ENCODE measurements at regions of chr2 and their contacts with region 1.

Region 1: GRCh38 chr2:9630749-9631483 is at the start of gene YWHAQ:
- DNase-seq: peak; percentile 99
- ATAC-seq: peak; percentile 88
- H3K4me3 Mint-ChIP-seq: peak within 1 kb of the TSS; percentile 96
- H3K27ac Mint-ChIP-seq: peak within 1 kb of the TSS; percentile 95
- H3K4me1 Mint-ChIP-seq: peaks cover 39% of the 10 kb centered on the region
- H3K27me3 Mint-ChIP-seq: peaks cover 20% of the 10 kb centered on the region
- total RNA-seq, gene YWHAQ: 191 to 216 TPM

Region 2: GRCh38 chr2:9474361-9474967 is 156.5 kb before region 1 on chr2 and contains the start of gene IAH1:
- POLR2A ChIA-PET with region 1: interaction called, 17 read pairs
- DNase-seq: peak; percentile 84
- ATAC-seq: peak; percentile 85
- H3K4me3 Mint-ChIP-seq: peak within 1 kb of the TSS; percentile 80
- H3K27ac Mint-ChIP-seq: peak within 1 kb of the TSS; percentile 86
- H3K4me1 Mint-ChIP-seq: peaks cover 28% of the 10 kb centered on the region
- H3K27me3 Mint-ChIP-seq: no peaks in the 10 kb centered on the region
- total RNA-seq, gene IAH1: 73.6 to 73.9 TPM

Region 3: DNA sequence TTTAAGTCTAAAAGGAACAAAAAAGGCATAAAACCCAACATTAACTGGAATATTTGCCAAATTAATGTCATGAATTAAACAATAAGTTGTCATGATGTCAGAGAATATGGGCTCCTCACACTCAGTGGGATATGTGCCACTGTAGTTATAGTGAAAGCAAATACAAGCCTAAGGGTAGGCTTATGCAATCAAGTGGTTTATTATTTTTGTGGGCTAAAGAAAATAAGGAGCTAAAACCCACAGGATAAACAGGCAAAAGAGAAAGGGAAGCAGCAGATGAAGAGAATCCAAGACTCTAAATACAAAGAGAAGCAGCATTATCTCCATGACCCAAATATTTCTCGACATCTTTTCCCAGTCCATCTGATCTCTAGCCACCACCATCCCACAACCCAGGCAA is 17.6 kb before region 1 on chr2:
- POLR2A ChIA-PET with region 1: interaction called, 20 read pairs
- DNase-seq: no peak
- ATAC-seq: no peak
- H3K4me3 Mint-ChIP-seq: no peak overlapping the region
- H3K27ac Mint-ChIP-seq: no peak overlapping the region
- H3K4me1 Mint-ChIP-seq: peaks cover 53% of the 10 kb centered on the region
- H3K27me3 Mint-ChIP-seq: no peaks in the 10 kb centered on the region

Region 4: DNA sequence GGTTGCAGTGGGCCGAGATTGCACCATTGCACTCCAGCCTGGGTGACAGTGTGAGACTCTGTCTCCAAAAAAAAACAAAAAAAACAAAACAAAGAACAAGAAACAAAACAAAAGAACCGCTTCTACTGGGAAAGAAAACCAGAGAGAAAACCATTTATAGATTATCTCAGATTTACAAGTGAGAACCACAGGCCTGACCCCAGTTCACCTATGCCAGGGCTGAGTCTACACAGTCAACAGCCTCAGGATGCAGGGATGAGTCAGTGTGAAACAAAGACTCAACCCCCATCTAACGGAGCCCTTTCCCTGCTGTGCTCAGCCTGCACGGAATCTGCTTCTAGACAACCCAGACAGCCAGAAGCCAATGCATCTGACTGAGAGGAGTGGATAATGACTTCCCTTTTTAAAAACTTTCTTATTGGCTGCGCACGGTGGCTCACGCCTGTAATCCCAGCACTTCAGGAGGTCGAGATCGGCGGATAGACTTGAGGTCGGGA is 25.4 kb after region 1 on chr2:
- POLR2A ChIA-PET with region 1: no interaction called
- DNase-seq: no peak
- ATAC-seq: peak; percentile 81
- H3K4me3 Mint-ChIP-seq: no peak overlapping the region
- H3K27ac Mint-ChIP-seq: no peak overlapping the region
- H3K4me1 Mint-ChIP-seq: peaks cover 9% of the 10 kb centered on the region
- H3K27me3 Mint-ChIP-seq: peaks cover 20% of the 10 kb centered on the region

Region 5: GRCh38 chr2:9703085-9703641 is 72.2 kb after region 1 on chr2:
- POLR2A ChIA-PET with region 1: interaction called, 12 read pairs
- DNase-seq: peak; percentile 68
- ATAC-seq: peak; percentile 88
- H3K4me3 Mint-ChIP-seq: peak overlapping the region; percentile 21
- H3K27ac Mint-ChIP-seq: peak overlapping the region; percentile 71
- H3K4me1 Mint-ChIP-seq: peaks cover 25% of the 10 kb centered on the region
- H3K27me3 Mint-ChIP-seq: peaks cover 5% of the 10 kb centered on the region

Region 6: GRCh38 chr2:9789371-9789968 is 158.6 kb after region 1 on chr2:
- POLR2A ChIA-PET with region 1: no interaction called
- DNase-seq: no peak
- ATAC-seq: no peak
- H3K4me3 Mint-ChIP-seq: no peak overlapping the region
- H3K27ac Mint-ChIP-seq: no peak overlapping the region
- H3K4me1 Mint-ChIP-seq: peaks cover 3% of the 10 kb centered on the region
- H3K27me3 Mint-ChIP-seq: peaks cover 12% of the 10 kb centered on the region

Measured in activated naive CD8-positive, alpha-beta T cell treated with anti-CD3 and anti-CD28 coated beads, Interleukin-2, amount 10 ng/mL, durations not matched to agents 7 days and 5 days (primary cell).